GM18951 (cell line): ENCODE measurements at regions of chr10 and their contacts with region 1.

Region 1: GRCh38 chr10:11793762-11794479 is 29.2 kb upstream of the PROSER2 start:
- POLR2A ChIP-seq: no peak

Region 2: DNA sequence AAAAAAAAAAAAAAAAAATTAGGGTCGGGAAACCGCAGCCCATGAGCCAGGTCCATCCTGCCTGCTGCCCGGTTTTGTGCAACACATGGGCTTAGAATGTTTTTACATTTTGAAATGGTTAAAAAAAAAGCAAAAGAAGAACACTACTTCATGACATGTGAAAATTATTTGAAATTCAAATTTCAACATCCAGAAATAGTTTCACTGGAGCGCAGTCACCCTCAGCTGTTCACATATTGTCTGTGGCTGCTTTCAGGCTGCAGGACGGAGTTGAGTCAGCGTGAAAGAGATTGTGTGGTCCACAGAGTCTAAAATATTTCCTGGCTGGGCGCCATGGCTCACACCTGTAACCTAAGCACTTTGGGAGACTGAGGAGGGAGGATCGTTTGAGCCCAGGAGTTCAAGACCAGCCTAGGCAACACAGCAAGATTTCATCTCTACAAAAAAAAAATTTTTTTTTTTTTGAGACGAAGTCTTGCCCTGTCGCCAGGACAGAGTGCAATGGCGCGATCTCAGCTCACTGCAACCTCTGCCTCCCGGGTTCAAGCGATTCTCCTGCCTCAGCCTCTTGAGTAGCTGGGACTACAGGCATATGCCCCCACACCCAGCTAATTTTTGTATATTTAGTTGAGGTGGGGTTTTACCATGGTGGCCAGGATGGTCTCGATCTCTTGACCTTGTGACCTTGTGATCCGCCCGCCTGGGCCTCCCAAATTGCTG is 115.7 kb before region 1 on chr10:
- in situ Hi-C with region 1: no loop called
- POLR2A ChIP-seq: peak; percentile 30

Region 3: GRCh38 chr10:11715815-11716494 is 78.0 kb before region 1 on chr10:
- in situ Hi-C with region 1: no loop called
- POLR2A ChIP-seq: no peak

Region 4: DNA sequence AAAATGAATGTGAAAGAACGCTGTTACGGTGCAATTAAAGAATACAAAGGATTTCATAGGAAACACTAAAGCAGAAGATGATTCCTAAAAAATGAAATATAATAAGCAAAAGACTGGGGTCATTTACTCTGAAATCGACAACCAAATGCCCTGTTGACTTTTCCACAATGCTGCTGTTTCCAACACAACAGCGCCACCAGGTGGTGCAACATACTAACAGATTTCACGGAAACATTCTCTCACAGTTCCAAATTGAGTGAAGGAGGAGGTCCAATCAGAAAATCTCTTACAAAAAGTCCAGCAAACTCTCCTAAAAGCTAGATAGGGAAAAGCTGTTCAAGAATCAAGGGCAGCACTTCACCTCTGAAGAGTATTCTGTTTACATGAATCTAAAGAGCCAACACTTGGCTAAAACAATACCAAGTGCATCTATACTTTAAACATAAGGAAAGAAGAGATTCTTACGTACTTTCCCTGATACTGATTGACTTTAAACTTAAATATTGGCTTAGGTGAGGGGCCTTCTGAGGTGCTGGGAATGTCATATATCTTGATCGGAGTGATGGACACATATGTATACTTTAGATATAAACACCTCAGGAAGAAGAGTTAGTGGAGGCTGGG is 192.8 kb after region 1 on chr10:
- in situ Hi-C with region 1: loop called (anchors 10 kb)
- POLR2A ChIP-seq: no peak

Region 5: GRCh38 chr10:12177642-12178041 is 383.7 kb after region 1 on chr10:
- in situ Hi-C with region 1: no loop called
- POLR2A ChIP-seq: no peak